BJ (cell line): ENCODE measurements at regions of chr15 and their contacts with region 1.

Region 1: GRCh38 chr15:31200735-31201151 is 99.2 kb upstream of the TRPM1 start:
- DNase-seq: no peak
- H3K4me3 ChIP-seq: no peak overlapping the region
- H3K27me3 ChIP-seq: peaks cover 10% of the 10 kb centered on the region
- CTCF ChIP-seq: peak; percentile 70

Region 2: DNA sequence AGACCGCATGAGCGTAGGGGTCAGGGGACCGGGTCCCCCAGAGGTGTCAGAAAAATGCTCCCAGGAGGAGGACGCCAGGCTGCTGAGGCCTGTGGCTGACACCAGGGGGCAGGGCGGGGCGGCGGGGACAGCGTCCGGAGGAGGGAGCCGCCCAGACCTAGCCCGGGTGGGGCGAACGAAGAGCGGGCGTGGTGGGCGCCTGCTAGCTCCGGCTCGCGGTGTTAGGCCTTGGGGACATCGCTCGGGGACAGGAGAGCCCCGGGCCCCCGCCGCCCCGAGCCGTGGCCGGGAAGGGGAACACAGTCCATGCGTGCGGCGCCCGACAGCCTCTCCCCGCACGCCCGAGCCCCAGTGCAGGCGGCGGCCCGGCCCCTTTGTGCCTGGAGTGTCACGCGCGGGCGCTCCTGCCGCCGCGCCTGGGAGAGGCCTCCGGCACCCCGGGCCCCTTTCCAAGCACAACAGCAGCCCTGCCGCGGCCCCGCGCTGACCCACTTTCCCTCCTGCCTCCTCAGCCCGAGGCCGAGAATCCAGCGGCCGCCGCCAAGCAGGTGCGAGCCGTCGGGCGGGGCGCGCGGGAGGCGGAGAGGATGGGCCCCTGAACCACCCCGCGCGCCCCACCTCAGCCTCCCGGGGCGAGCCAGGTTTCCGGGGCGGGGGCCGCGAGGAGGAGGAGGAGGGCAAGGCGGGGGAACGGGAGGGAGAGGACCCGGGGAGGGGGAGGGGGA is 14.9 kb after region 1 on chr15:
- CTCF ChIA-PET with region 1: interaction called, 17 read pairs
- POLR2A ChIA-PET with region 1: no interaction called
- DNase-seq: no peak
- H3K4me3 ChIP-seq: peak overlapping the region; percentile 44
- H3K27me3 ChIP-seq: peaks cover 3% of the 10 kb centered on the region
- CTCF ChIP-seq: peak; percentile 86

Region 3: GRCh38 chr15:31365655-31366127 is 164.9 kb after region 1 on chr15:
- CTCF ChIA-PET with region 1: interaction called, 13 read pairs
- POLR2A ChIA-PET with region 1: no interaction called
- DNase-seq: peak; percentile 37
- H3K4me3 ChIP-seq: no peak overlapping the region
- H3K27me3 ChIP-seq: no peaks in the 10 kb centered on the region
- CTCF ChIP-seq: peak; percentile 62

Region 4: GRCh38 chr15:31435261-31435911 is 234.6 kb after region 1 on chr15:
- CTCF ChIA-PET with region 1: interaction called, 21 read pairs
- POLR2A ChIA-PET with region 1: no interaction called
- DNase-seq: peak; percentile 50
- H3K4me3 ChIP-seq: no peak overlapping the region
- H3K27me3 ChIP-seq: no peaks in the 10 kb centered on the region
- CTCF ChIP-seq: peak; percentile 85

Region 5: DNA sequence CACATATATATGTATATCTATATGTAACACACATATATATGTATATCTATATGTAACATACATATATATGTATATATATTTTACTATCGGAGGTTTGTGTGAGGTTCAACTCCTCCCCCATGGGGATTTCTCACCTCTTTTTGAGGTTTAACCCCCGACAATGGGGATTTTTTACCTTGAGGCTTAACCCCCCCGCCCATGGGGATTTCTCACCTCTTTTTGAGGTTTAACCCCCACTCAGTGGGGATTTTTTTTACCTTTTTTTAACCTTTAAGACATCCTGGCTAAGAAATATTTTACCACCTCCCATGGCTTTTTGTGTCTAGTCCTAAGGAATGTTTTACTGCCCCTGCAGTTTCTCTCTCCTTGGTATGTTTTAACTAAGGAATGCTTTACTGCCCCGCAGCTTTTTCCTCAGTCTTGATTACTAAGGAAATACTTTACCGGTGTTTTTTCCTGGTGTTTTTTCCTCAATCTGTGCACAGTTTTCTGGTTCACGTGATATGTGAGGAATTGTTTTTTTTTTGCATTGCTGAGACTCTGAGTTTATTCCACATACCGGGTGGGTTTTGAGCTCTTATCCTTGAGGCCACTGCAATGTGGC is 311.1 kb after region 1 on chr15:
- CTCF ChIA-PET with region 1: no interaction called
- POLR2A ChIA-PET with region 1: interaction called, 10 read pairs
- DNase-seq: no peak
- H3K4me3 ChIP-seq: no peak overlapping the region
- H3K27me3 ChIP-seq: no peaks in the 10 kb centered on the region
- CTCF ChIP-seq: no peak